Activated T-helper 1 cell treated with anti-CD3 and anti-CD28 coated beads, Interleukin-12 subunit alpha, Interleukin-12 subunit beta, Interleukin-2, Interleukin-4 antibody, amounts not matched to agents 30 ng/mL and 10 ng/mL and 1 ng/mL, durations not matched to agents 14 hours and 24 hours and 36 hours (primary cell): ENCODE measurements at regions of chr5 and their contacts with region 1.

Region 1: GRCh38 chr5:123401320-123401719 is 21.9 kb downstream of the CEP120 start:
- DNase-seq: no peak
- H3K4me3 Mint-ChIP-seq: no peak overlapping the region
- H3K27ac Mint-ChIP-seq: no peak overlapping the region
- H3K4me1 Mint-ChIP-seq: peaks cover 8% of the 10 kb centered on the region
- H3K27me3 Mint-ChIP-seq: no peaks in the 10 kb centered on the region

Region 2: DNA sequence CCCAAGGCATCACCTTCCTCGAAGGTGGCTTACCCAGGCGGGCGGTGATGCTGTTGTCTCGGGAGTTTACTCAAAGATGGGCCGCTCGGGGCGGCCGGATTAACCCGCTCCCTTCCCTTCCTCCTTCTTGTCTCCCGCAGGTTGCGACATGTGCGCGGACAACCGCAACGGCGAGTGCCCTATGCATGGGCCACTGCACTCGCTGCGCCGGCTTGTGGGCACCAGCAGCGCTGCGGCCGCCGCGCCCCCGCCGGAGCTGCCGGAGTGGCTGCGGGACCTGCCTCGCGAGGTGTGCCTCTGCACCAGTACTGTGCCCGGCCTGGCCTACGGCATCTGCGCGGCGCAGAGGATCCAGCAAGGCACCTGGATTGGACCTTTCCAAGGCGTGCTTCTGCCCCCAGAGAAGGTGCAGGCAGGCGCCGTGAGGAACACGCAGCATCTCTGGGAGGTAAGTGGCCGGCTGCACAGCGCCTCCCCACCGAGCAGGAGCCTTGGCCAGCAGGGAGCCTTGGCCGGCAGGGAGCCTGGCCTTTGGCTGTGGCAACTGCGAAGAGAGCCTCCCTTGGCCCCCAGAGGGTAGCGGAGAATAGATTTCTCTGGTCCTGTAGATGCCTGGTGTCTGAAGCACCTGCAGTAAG is 301.7 kb before region 1 on chr5:
- intact Hi-C with region 1: loop called (anchors 2 kb)
- DNase-seq: no peak
- H3K4me3 Mint-ChIP-seq: no peak overlapping the region
- H3K27ac Mint-ChIP-seq: no peak overlapping the region
- H3K4me1 Mint-ChIP-seq: peaks cover 6% of the 10 kb centered on the region
- H3K27me3 Mint-ChIP-seq: peaks cover 64% of the 10 kb centered on the region

Region 3: GRCh38 chr5:123696921-123697341 is 295.6 kb after region 1 on chr5:
- intact Hi-C with region 1: no loop called
- DNase-seq: no peak
- H3K4me3 Mint-ChIP-seq: no peak overlapping the region
- H3K27ac Mint-ChIP-seq: no peak overlapping the region
- H3K4me1 Mint-ChIP-seq: no peaks in the 10 kb centered on the region
- H3K27me3 Mint-ChIP-seq: no peaks in the 10 kb centered on the region